GM12878 (cell line): ENCODE measurements at regions of chr2 and their contacts with region 1.

Region 1: DNA sequence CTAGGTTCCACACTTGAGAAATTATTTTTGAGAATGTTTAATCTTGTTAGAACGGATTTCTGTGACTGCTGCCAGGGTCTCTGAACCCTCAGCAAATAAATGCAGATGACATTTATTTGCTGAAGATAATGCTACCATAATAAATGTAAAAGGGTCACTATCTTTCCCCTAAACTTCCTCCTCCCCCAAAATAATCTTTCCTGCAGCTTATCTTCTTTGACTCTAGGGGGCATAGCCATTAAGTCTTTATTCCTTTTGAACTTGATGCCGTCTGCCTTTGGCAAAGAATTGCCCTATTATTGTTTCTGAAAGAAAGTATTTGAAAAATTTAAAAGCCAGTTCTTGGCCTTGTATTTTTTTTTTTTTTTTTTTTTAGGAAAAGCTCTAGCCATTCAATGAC is 63.6 kb upstream of the ACSL3 start:
- DNase-seq: no peak
- ATAC-seq: peak; percentile 70; the same call in 2 of the 3 replicates
- H3K4me3 ChIP-seq: no peak overlapping the region
- H3K27ac ChIP-seq: no peak overlapping the region
- H3K4me1 ChIP-seq: no peaks in the 10 kb centered on the region
- H3K27me3 ChIP-seq: no peaks in the 10 kb centered on the region
- CTCF ChIP-seq: peak; percentile 38 to 49 (median 49); a peak in 5 of 6 replicates
- EP300 ChIP-seq: no peak
- POLR2A ChIP-seq: no peak
- RAD21 ChIP-seq: peak; percentile 67

Region 2: DNA sequence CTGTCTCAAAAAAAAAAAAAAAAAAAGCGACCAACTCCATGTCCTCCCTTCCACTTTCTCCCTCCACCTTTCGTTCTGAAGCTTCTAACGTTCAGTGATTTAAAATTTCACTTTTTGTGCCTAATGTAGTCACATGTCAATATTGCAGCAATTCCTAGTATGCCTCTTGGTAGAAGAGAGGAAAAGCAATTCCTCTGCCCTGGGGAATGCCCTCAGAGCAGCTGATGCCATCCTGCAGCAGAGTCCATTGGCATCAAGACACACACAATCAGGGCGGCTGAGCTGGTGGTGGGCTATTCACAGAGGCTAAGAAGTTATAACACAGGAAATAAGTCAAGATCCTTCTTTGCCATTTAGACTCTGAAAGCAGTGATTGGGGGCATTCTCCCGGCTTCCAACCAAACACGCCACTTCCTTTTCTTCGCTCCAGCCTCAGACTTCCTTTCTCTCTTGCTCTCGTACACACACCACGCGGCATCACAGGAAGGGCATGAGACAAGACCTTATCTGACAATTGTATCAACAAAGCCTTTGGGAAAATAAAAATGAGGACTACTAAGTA is 53.9 kb before region 1 on chr2:
- CTCF ChIA-PET with region 1: no interaction called
- POLR2A ChIA-PET with region 1: no interaction called
- RAD21 ChIA-PET with region 1: no interaction called
- SMC1A ChIA-PET with region 1: no interaction called
- in situ Hi-C with region 1: no loop called
- intact Hi-C with region 1: no loop called
- DNase-seq: no peak
- ATAC-seq: no peak
- H3K4me3 ChIP-seq: no peak overlapping the region
- H3K27ac ChIP-seq: no peak overlapping the region
- H3K4me1 ChIP-seq: peaks cover 4% of the 10 kb centered on the region; the same call in 1 of the 2 replicates
- H3K27me3 ChIP-seq: no peaks in the 10 kb centered on the region
- CTCF ChIP-seq: no peak
- EP300 ChIP-seq: no peak
- POLR2A ChIP-seq: no peak
- RAD21 ChIP-seq: no peak

Region 3: GRCh38 chr2:222813177-222813843 is 16.0 kb after region 1 on chr2:
- CTCF ChIA-PET with region 1: interaction called, 11 read pairs
- POLR2A ChIA-PET with region 1: no interaction called
- RAD21 ChIA-PET with region 1: no interaction called
- SMC1A ChIA-PET with region 1: interaction called, 5 read pairs
- in situ Hi-C with region 1: no loop called
- intact Hi-C with region 1: no loop called
- DNase-seq: peak; percentile 79
- ATAC-seq: peak; percentile 94
- H3K4me3 ChIP-seq: no peak overlapping the region
- H3K27ac ChIP-seq: peak overlapping the region; percentile 19; the same call in 1 of the 2 replicates
- H3K4me1 ChIP-seq: peaks cover 17% of the 10 kb centered on the region
- H3K27me3 ChIP-seq: no peaks in the 10 kb centered on the region; a peak in 1 of 4 replicates
- CTCF ChIP-seq: no peak
- EP300 ChIP-seq: no peak; a peak in 1 of 4 replicates
- POLR2A ChIP-seq: no peak
- RAD21 ChIP-seq: no peak

Region 4: DNA sequence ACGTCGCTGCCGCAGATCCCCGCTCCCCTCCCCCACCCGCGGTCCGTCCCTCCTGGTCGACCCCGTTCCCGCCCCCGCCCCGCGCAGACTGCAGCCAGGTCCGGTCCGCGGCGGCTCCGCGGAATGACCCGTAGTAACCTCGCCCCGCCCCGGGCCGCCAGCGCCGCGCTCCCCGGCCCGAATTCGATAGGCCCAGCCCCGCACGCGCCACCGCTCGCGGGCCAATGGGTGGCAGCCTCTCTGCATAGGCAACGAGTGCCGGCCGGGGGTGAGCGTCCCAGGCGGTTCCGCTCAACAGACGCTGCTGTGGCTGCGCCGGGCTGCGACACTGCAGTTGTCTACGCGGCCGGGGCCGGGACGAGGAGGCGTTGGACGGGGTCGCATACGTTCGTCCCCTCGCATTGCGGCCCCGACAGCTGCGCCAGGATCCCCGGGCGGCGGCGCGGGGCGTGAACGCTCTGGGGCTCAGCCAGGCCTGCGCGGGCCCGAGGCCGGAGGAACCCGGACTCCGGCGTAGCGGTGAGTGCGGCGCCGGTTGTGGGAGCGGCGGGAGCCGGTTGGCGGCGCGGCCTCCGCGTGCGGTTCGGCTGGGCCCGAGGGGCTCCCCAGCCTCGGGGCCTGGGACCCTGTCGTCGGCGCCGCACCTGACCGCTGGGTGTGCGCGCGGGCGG is 63.6 kb after region 1 on chr2 and contains the start of gene ACSL3:
- CTCF ChIA-PET with region 1: interaction called, 15 read pairs
- POLR2A ChIA-PET with region 1: no interaction called
- RAD21 ChIA-PET with region 1: interaction called, 10 read pairs
- SMC1A ChIA-PET with region 1: interaction called, 5 read pairs
- in situ Hi-C with region 1: no loop called
- intact Hi-C with region 1: no loop called
- DNase-seq: peak; percentile 66
- ATAC-seq: peak; percentile 98
- H3K4me3 ChIP-seq: peak within 1 kb of the TSS; percentile 67
- H3K27ac ChIP-seq: peak within 1 kb of the TSS; percentile 74
- H3K4me1 ChIP-seq: peaks cover 6% of the 10 kb centered on the region
- H3K27me3 ChIP-seq: no peaks in the 10 kb centered on the region
- CTCF ChIP-seq: no peak; a peak in 1 of 6 replicates
- EP300 ChIP-seq: no peak
- POLR2A ChIP-seq: peak; percentile 100
- RAD21 ChIP-seq: no peak
- polyA plus RNA-seq, gene ACSL3: 15.6 to 24.0 TPM